PC-9 (cell line): ENCODE measurements at regions of chr2 and their contacts with region 1.

Region 1: DNA sequence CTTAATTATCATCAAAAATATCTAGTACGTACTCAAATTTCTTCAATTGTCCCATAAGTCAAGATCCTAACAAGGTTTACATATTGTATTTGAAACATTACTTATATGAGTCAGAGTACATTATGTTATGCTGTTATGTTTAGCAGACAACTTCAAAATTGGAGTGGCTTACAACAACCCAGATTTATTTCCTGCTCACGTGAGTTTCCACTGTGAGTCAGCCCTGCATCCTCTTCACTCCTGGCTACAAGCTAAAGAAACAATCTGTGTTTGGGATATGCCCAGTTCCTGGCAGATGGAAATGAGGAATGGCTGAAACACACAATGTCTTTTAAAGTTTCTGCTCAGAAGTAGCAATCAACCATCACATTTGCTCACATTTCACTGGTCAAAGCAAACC is 31.5 kb upstream of the TANC1 start:
- DNase-seq: no peak
- H3K4me3 ChIP-seq: no peak overlapping the region
- H3K27ac ChIP-seq: no peak overlapping the region
- H3K4me1 ChIP-seq: no peaks in the 10 kb centered on the region; the same call in 1 of the 2 replicates
- H3K27me3 ChIP-seq: no peaks in the 10 kb centered on the region
- CTCF ChIP-seq: no peak

Region 2: GRCh38 chr2:158953926-158954763 is 17.2 kb after region 1 on chr2:
- CTCF ChIA-PET with region 1: no interaction called
- POLR2A ChIA-PET with region 1: interaction called, 20 read pairs
- intact Hi-C with region 1: no loop called
- DNase-seq: peak; percentile 50 to 58
- H3K4me3 ChIP-seq: no peak overlapping the region
- H3K27ac ChIP-seq: no peak overlapping the region
- H3K4me1 ChIP-seq: peaks cover 14% of the 10 kb centered on the region
- H3K27me3 ChIP-seq: no peaks in the 10 kb centered on the region
- CTCF ChIP-seq: no peak